Activated CD4-positive, alpha-beta T cell treated with anti-CD3 and anti-CD28 coated beads for 36 hours (primary cell): ENCODE measurements at regions of chr4 and their contacts with region 1.

Region 1: DNA sequence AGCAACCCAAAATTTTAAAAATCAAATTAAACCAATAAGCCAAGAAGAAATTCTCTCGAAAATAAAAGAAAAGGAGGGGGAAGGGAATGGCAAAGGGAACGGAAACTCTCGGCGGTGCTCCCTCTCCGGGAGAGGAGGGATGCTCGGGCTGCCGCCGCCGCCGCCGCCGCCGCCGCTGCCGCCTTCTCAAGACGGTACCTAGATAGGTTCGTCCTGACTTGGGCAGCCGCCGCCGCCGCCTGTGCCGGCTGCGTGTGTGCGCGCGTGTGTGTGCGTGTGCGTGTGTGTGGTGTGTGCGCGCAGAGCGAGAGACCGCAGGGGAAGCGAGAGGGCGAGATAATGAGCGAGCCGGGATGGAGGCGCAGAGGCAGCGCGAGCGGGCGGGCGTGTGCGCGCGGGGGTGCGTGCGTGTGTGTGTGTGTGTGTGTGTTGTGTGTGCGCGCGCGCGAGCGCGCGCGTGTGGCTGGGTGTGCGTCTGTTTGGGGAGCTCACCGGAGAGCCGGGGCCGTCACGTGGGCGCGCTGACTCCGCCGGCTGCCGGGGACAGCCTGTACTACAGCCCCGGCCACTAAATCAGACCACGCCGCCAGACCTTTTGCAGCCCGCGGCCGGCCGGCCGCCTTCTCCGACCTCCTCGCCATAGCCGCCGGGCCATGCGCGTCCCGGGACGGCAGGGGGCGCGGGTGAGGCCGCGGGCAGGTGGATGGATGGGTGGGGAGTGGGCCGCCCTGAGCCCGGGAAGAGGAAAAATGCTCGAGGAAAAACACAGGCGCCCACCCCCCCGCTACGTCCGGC is 111.6 kb downstream of the DHX15 start:
- DNase-seq: peak; percentile 75
- ATAC-seq: peak; percentile 54
- H3K4me3 Mint-ChIP-seq: peak overlapping the region; percentile 79
- H3K27ac Mint-ChIP-seq: peak overlapping the region; percentile 64
- H3K4me1 Mint-ChIP-seq: peaks cover 29% of the 10 kb centered on the region
- H3K27me3 Mint-ChIP-seq: peaks cover 58% of the 10 kb centered on the region

Region 2: DNA sequence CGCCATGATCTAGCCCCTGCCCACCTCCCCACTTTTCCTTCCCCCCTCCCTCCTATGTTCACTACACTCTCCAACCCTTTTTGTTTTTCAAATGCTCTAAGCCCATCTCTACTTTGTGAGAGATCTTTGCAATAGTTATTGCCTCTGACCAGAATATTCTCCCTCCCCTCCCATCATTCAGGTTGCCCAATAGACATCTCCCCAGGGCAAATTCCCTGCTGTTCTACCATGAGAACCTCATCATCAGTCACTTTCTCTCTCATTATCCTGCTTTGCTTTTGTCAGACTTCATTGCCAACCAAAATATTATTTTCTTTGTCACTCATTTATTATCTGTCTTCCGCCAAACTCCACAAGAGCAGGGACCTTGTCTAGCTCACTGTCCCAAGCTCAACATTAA is 314.7 kb before region 1 on chr4:
- CTCF ChIA-PET with region 1: no interaction called
- POLR2A ChIA-PET with region 1: no interaction called
- intact Hi-C with region 1: no loop called
- DNase-seq: no peak
- ATAC-seq: no peak
- H3K4me3 Mint-ChIP-seq: no peak overlapping the region
- H3K27ac Mint-ChIP-seq: no peak overlapping the region
- H3K4me1 Mint-ChIP-seq: no peaks in the 10 kb centered on the region
- H3K27me3 Mint-ChIP-seq: no peaks in the 10 kb centered on the region

Region 3: DNA sequence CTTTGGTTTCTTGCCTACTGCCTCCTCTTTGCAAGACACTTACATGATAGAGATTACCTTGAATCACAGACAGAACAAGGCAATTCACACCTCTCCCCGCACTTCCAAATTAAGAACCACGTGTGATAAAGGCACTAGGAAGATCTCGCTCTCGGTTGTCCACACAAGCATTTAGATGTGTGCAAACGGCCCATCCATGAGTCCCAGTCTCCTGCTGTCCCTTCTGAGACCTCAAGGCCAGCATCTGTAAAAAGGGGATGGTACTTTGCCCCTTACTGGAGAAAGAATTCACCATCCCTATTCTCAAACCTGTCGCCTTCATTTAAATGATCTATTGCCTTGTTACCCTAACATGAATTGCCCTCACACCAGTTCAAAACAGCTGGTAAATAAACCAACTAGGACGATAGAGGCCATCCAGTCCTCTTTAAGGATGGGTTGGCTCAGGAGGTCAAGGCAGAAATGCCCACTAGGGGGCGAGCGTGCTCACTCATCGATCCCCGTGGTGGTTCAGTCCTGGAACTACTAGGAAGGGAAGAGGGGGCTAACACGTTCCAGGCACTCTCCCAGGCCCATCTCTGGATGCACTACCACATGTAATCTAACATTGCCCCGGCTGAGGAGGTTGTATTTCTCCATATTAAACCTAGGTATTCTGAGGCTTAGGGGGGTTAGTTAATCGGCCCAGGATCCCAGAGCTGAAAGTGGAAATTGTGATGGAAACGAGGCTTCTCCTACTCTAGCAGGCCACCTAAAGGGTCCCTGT is 15.9 kb after region 1 on chr4:
- CTCF ChIA-PET with region 1: interaction called, 13 read pairs
- POLR2A ChIA-PET with region 1: no interaction called
- intact Hi-C with region 1: no loop called
- DNase-seq: peak; percentile 86
- ATAC-seq: peak; percentile 80
- H3K4me3 Mint-ChIP-seq: no peak overlapping the region
- H3K27ac Mint-ChIP-seq: no peak overlapping the region
- H3K4me1 Mint-ChIP-seq: no peaks in the 10 kb centered on the region
- H3K27me3 Mint-ChIP-seq: peaks cover 25% of the 10 kb centered on the region

Region 4: GRCh38 chr4:24686871-24687680 is 214.4 kb after region 1 on chr4:
- CTCF ChIA-PET with region 1: no interaction called
- POLR2A ChIA-PET with region 1: no interaction called
- intact Hi-C with region 1: loop called (anchors 5 kb)
- DNase-seq: peak; percentile 58
- ATAC-seq: no peak
- H3K4me3 Mint-ChIP-seq: no peak overlapping the region
- H3K27ac Mint-ChIP-seq: no peak overlapping the region
- H3K4me1 Mint-ChIP-seq: no peaks in the 10 kb centered on the region
- H3K27me3 Mint-ChIP-seq: peaks cover 13% of the 10 kb centered on the region